Vagina (tissue), 2 donors: ENCODE measurements at regions of chr1 and their contacts with region 1.

Region 1: DNA sequence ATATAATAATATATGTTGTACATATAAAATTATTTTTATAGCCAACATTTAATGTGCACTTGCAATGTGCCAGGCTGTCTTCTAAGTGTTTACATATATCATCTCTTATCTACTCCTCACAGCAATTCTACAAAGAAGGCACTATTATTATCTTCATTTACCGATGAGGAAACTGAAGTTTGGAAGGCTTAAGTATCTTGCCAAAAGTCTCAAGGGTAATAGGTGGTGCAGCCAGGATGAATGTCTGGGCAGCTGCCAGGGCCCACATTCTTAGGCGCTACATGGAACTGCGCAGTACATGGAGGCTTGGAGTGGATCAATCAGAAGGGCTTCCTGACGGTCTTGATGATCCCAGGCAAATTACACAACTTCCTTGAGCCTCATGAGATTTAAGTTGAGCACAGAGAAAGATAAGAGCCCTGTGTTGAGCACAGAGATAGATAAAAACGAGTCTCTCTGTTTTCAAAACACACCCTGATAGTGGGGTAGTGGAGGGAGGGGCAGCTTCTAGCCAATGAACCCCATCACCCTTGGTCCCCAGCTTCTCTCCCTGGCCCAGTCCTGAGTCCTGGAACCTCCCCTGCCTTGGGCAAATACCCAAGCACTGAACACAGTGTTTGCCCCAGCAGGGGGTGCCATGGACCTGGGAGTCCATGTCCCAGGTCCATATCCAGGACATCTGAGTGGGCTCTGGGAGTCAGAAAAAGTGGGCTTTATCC is 9.2 kb downstream of the POU3F1 start:
- DNase-seq: no peak
- H3K4me3 ChIP-seq: no peak overlapping the region
- H3K27ac ChIP-seq: no peak overlapping the region
- H3K4me1 ChIP-seq: no peaks in the 10 kb centered on the region
- H3K27me3 ChIP-seq: no peaks in the 10 kb centered on the region
- CTCF ChIP-seq: no peak
- POLR2A ChIP-seq: no peak

Region 2: DNA sequence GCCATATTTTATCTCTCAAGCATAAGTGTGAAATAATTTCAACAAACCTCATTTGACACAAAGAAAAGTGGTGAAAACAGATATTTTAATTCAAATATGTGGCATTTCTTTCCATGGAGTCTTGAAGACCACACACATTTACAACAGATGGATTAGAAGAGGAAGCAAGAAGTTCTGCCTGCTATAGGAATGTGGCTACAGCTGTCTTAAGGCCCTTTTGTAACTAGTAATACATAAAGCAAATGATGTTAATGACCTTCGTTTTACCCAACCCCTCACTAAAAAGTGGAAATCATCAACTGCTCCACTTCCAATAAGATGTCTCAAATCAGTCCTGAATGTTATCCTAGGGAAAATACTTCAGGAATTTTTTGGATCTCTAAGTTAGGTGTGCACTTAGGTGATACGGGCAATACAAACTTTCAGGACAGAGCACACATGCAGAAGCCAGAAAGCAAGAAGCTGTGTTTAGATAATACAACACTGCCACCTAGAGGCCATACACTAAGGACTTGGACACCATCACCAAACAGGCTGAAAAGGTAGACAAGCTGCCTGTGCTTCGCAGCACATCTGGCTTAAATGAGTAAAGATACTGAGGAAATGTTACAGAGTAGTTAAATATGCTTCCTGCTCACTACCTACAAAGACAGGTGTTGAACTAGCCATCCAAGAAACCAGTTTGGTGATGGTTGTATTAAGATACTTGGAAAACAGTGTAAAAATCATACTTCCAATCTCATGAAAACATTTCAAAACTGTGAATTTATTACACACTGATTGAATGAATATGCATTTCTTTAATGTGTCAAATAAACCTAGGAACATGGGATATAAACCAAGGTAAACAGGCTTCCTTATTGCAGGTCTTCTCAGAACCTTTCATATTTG is 797.8 kb after region 1 on chr1:
- intact Hi-C with region 1: loop called (anchors 5 kb)
- DNase-seq: no peak
- H3K4me3 ChIP-seq: no peak overlapping the region
- H3K27ac ChIP-seq: no peak overlapping the region
- H3K4me1 ChIP-seq: no peaks in the 10 kb centered on the region
- H3K27me3 ChIP-seq: no peaks in the 10 kb centered on the region
- CTCF ChIP-seq: peak; percentile 54 to 79 (median 70)
- POLR2A ChIP-seq: no peak